ENCODE measurements at regions of chr4 and their contacts with region 1.

Region 1: GRCh38 chr4:78414116-78414515 is 137.5 kb upstream of the ANXA3 start:
- DNase-seq: no peak
- H3K4me3 Mint-ChIP-seq: no peak overlapping the region
- H3K27ac Mint-ChIP-seq: no peak overlapping the region
- H3K4me1 Mint-ChIP-seq: no peaks in the 10 kb centered on the region
- H3K27me3 Mint-ChIP-seq: peaks cover 7% of the 10 kb centered on the region

Region 2: DNA sequence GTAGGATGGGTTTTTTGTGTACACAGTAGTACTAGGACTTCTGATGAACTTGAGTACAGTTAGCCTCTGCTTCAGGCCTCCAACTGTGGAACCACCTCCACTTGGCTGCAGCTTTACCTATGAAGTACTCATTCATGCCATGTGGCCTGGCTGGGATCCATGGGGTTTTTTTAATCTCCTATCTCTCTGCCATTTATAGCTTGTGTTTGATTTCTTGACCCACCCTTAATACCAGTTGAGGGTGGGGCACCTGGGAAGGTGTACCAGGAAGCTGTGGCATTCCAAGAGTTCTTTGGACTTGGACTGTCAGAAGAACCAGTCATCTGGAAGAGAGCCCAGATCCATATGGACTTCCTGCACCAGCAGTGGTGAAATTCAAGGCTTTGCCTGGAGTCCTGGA is 1749.0 kb before region 1 on chr4:
- CTCF ChIA-PET with region 1: no interaction called
- intact Hi-C with region 1: no loop called
- DNase-seq: no peak
- H3K4me3 Mint-ChIP-seq: no peak overlapping the region
- H3K27ac Mint-ChIP-seq: no peak overlapping the region
- H3K4me1 Mint-ChIP-seq: no peaks in the 10 kb centered on the region
- H3K27me3 Mint-ChIP-seq: peaks cover 2% of the 10 kb centered on the region

Region 3: DNA sequence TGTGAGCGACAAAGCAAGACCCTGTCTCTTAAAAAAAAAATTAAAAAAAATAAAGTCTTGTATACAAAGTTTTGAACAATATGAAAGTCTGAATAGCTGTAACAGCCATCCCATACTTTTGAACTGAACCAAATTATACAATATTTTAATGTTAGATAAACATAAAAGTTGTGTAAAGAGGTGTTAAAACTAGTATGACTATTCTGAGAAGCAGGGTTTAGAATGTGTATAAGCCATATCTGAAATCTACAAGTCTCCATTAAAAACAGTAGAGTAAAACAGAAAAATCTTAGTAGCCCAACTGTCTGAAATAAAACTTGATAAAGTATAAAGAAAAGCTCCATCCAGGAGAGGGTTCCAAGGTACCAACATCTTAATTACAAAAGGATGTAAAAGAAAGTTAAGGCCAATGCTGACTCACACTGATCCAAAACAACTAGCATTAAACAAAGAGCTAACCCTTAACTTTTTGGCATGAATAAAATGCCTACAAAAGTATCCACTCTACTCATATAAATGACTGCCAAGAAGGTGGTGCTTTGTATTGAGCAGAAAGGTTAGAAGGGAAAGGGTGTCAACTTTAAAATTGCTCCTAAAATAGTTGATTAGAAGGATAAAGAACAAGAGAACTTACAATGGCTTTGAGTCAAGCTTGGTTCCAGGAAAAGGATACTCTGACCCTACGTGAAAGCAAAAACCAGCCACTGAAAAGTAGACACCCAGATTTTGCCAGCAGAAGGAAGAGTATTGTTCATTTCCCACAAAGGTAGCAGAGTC is 613.4 kb before region 1 on chr4:
- CTCF ChIA-PET with region 1: no interaction called
- intact Hi-C with region 1: loop called (anchors 5 kb)
- DNase-seq: no peak
- H3K4me3 Mint-ChIP-seq: peak overlapping the region; percentile 70
- H3K27ac Mint-ChIP-seq: peak overlapping the region; percentile 88
- H3K4me1 Mint-ChIP-seq: peaks cover 81% of the 10 kb centered on the region
- H3K27me3 Mint-ChIP-seq: no peaks in the 10 kb centered on the region